ENCODE measurements at regions of chr10 and their contacts with region 1.

Region 1: GRCh38 chr10:118568327-118568848 is 27.1 kb downstream of the PRLHR start:
- DNase-seq: peak; percentile 70
- H3K4me3 ChIP-seq: peak overlapping the region in 3 of 4 donors; percentile 19 to 33 (median 28)
- H3K27ac ChIP-seq: peak overlapping the region in 2 of 4 donors; percentile 13 to 17
- H3K4me1 ChIP-seq: peaks cover 16 to 62% (median 58%) of the 10 kb centered on the region in 4 donors
- H3K27me3 ChIP-seq: no peaks in the 10 kb centered on the region
- CTCF ChIP-seq: peak; percentile 84 to 90 (median 86)
- EP300 ChIP-seq: no peak
- POLR2A ChIP-seq: no peak

Region 2: DNA sequence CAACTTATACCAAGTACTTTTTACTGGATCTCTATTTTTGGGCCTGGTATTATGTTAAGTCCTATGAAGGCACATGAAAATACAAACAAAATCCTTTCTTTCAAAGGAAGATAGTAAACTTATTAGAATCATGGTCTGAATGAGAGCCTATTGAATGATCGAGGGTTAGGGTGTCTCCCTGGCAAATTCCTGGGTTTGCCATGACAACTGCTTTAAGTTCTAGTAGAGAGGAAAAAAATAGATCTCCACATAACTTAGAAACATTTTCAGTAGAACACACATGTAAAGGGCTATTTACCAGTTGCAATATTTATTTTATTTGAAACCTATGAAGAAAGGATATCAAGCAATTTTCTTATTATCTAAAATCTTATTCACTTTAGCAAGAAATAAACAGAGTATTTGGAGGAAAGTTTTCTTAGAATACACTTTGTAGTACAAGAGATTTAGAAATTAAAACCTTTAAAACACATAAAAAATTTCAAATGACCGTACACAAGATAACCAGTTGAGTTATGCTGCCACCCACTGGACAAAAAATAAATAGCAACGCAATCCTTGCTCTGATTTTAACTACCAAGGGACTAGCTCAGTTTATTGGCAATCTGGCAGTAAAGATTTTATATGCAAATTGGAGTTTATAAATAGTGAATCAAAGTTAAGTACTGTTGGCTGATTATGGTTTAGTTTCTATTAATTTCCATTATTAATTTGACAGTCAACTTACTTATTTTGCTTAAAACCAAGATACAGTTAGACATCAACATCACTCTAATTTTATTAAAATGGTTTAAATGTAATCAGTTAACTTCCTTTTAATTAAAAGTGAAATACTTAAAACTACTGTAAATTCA is 152.5 kb after region 1 on chr10:
- intact Hi-C with region 1: loop called (anchors 1 kb)
- DNase-seq: no peak
- H3K4me3 ChIP-seq: no peak overlapping the region
- H3K27ac ChIP-seq: peak overlapping the region in 1 of 4 donors; percentile 20
- H3K4me1 ChIP-seq: peaks cover 14 to 43% (median 33%) of the 10 kb centered on the region in 4 donors
- H3K27me3 ChIP-seq: no peaks in the 10 kb centered on the region
- CTCF ChIP-seq: peak; percentile 84 to 92 (median 89)
- EP300 ChIP-seq: no peak
- POLR2A ChIP-seq: no peak

Region 3: DNA sequence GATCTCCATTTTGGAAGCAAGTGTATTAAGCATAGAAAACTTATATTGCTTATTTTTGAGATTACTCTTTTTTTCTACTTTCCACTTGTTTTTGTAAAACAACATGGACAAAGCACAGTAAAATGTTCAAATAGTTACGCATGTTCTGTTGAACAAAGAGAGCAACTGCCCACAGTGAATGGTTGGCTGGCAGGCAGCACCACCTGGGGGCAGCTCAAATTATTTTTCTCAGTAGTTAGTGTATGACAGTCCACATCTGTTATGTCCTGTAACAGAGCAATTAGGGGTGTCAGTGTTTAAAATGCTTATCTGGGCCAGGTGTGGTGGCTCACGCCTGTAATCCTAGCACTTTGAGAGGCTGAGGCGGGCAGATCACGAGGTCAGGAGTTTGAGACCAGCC is 232.5 kb after region 1 on chr10:
- intact Hi-C with region 1: loop called (anchors 5 kb)
- DNase-seq: no peak
- H3K4me3 ChIP-seq: no peak overlapping the region
- H3K27ac ChIP-seq: no peak overlapping the region
- H3K4me1 ChIP-seq: peaks cover 0 to 25% (median 11%) of the 10 kb centered on the region in 4 donors
- H3K27me3 ChIP-seq: no peaks in the 10 kb centered on the region
- CTCF ChIP-seq: peak; percentile 42 to 52 (median 50)
- EP300 ChIP-seq: no peak
- POLR2A ChIP-seq: no peak